Esophagus squamous epithelium (tissue), 5 donors: ENCODE measurements at regions of chr10 and their contacts with region 1.

Region 1: DNA sequence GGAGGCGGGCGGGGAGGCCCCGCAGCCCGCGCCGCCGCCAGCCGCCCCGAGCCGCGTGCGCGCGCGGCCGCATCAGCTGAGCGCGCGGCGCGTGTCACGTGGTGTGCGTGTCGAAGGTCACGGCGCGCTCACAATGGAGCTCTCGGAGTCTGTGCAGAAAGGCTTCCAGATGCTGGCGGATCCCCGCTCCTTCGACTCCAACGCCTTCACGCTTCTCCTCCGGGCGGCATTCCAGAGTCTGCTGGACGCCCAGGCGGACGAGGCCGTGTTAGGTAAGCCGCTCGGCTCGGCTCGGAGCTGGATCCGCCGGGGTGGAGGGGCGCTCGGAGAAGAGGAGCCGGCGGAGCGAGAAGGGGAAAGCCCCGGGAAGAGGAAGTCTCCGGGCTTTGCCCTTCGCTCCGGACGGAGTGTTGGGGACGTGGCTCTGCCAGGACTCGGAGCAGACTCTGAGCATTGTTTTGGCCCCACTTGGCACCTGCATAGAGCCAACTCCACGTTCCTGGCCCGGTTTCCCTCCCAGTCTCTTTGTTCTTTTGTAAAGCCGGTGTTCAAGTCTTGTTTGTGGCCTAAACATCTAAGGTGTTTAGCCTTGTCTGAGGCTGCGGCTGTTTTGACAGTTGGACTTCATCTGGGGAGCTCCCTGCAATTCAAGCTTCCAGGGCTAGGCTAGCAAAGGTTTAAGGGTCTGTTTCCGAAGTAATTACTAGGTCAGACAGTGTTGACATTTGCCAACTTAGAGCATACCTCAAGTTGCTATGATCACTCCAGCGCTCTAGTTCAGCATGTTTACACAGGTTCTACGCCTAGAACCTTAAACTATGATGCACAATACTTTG is at the start of gene COMMD3:
- DNase-seq: peak; percentile 64
- H3K4me3 ChIP-seq: peak within 1 kb of the TSS; percentile 68 to 92 (median 82)
- H3K27ac ChIP-seq: peak within 1 kb of the TSS; percentile 89 to 95 (median 94)
- H3K4me1 ChIP-seq: peaks cover 0 to 45% (median 8%) of the 10 kb centered on the region in 3 donors
- H3K27me3 ChIP-seq: no peaks in the 10 kb centered on the region
- CTCF ChIP-seq: no peak
- POLR2A ChIP-seq: peak in 3 of 4 donors; percentile 18 to 85 (median 41)
- total RNA-seq, gene COMMD3: 14.9 to 31.4 (median 24.2) TPM

Region 2: GRCh38 chr10:22251751-22252223 is 64.7 kb before region 1 on chr10:
- intact Hi-C with region 1: loop called (anchors 10 kb)
- DNase-seq: no peak
- H3K4me3 ChIP-seq: peak overlapping the region; percentile 61 to 94 (median 80)
- H3K27ac ChIP-seq: peak overlapping the region; percentile 91 to 98 (median 97)
- H3K4me1 ChIP-seq: peaks cover 0 to 17% (median under 1%) of the 10 kb centered on the region in 3 donors
- H3K27me3 ChIP-seq: no peaks in the 10 kb centered on the region
- CTCF ChIP-seq: no peak
- POLR2A ChIP-seq: peak in 1 of 4 donors; percentile 15